Mammary epithelial cell (primary cell): ENCODE measurements at regions of chr10 and their contacts with region 1.

Region 1: GRCh38 chr10:111545861-111546605 is 469.2 kb downstream of the ADRA2A start:
- DNase-seq: no peak
- H3K4me3 ChIP-seq: no peak overlapping the region
- H3K27ac ChIP-seq: no peak overlapping the region
- H3K4me1 ChIP-seq: no peaks in the 10 kb centered on the region
- H3K27me3 ChIP-seq: peaks cover 3% of the 10 kb centered on the region
- CTCF ChIP-seq: no peak

Region 2: DNA sequence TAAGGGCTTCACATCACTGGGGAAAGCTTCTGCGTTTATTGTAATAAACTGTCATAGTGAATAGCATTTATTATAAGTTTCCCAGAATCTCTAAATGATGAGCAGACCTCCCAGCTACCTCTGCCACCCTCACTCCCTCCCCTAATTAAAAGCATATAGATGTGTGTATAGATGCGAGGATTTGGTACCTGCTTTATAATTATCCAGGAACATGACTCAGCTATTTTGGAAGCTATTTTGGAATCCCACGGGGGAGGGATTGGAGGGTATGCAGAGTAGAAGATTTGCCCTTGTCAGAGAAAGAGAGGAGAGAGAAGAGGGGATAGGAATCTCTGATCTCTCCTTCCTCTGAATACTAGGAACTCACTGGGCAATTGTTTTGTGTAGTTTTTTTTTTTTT is 13.9 kb before region 1 on chr10:
- CTCF ChIA-PET with region 1: interaction called, 10 read pairs
- dilution Hi-C with region 1: no loop called
- in situ Hi-C with region 1: no loop called
- intact Hi-C with region 1: no loop called
- DNase-seq: no peak
- H3K4me3 ChIP-seq: no peak overlapping the region
- H3K27ac ChIP-seq: no peak overlapping the region
- H3K4me1 ChIP-seq: no peaks in the 10 kb centered on the region
- H3K27me3 ChIP-seq: no peaks in the 10 kb centered on the region
- CTCF ChIP-seq: no peak